ENCODE measurements at regions of chr6 and their contacts with region 1.

Region 1: GRCh38 chr6:170438402-170438753 is 114.7 kb downstream of the PSMB1 start:
- DNase-seq: peak; percentile 92 to 98
- ATAC-seq: peak; percentile 86 to 93 (median 88)
- H3K4me3 ChIP-seq: peak overlapping the region; percentile 55
- H3K27ac ChIP-seq: peak overlapping the region; percentile 95
- H3K4me1 ChIP-seq: peaks cover 29% of the 10 kb centered on the region
- H3K27me3 ChIP-seq: no peaks in the 10 kb centered on the region
- CTCF ChIP-seq: no peak

Region 2: DNA sequence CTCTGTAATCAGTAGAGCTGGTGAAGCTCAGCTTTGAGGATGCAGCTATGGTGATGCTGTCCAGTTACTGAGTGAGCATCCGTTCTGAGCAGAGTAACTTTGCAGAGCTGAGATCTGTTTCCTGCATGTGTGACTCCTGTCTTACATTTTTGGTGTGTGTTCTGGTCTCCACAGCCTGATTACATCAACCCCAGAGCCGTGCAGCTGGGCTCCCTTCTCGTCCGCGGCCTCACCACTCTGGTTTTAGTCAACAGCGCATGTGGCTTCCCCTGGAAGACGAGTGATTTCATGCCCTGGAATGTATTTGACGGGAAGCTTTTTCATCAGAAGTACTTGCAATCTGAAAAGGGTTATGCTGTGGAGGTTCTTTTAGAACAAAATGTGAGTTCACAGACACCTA is 50.3 kb before region 1 on chr6:
- intact Hi-C with region 1: no loop called
- DNase-seq: no peak
- ATAC-seq: no peak
- H3K4me3 ChIP-seq: no peak overlapping the region
- H3K27ac ChIP-seq: no peak overlapping the region
- H3K4me1 ChIP-seq: no peaks in the 10 kb centered on the region
- H3K27me3 ChIP-seq: no peaks in the 10 kb centered on the region
- CTCF ChIP-seq: no peak

Region 3: DNA sequence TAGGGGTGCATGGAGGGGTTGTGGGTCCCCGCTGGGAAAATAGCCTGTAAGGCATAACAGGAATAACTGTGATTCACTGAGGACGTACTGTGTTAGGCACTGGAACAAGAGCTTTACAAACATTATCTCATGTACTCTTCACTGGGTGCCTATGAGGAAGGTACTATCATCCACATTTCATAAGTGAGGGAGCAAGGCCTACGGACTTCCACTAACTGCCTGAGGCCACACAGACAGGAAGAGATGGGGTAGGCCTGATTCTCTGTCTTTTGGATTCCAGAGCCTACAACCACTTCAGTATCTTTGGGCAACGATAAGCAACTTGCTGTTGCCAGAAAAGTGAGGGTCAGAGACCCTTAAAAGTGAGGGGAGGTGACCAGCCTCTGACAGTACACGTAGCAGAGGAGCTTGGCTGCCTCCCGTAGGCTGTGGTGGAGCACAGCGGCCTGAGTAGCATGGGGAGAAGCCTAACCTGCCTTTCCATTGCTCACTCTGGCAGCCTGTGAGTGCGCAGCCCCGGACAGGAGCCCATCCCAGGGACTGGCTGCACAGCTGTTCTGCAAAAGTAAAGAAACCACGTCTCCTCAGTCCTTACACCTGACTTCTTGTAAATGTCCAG is 84.3 kb after region 1 on chr6:
- intact Hi-C with region 1: loop called in 1 of 2 experiments (anchors 5 kb)
- DNase-seq: no peak
- ATAC-seq: peak in 3 of 4 donors; percentile 28 to 43 (median 39)
- H3K4me3 ChIP-seq: no peak overlapping the region
- H3K27ac ChIP-seq: peak overlapping the region; percentile 92
- H3K4me1 ChIP-seq: peaks cover 44% of the 10 kb centered on the region
- H3K27me3 ChIP-seq: no peaks in the 10 kb centered on the region
- CTCF ChIP-seq: no peak